ENCODE measurements at regions of chr2 and their contacts with region 1.

Region 1: GRCh38 chr2:7825591-7826312 is 856.1 kb upstream of the ID2 start:
- DNase-seq: peak in 1 of 9 donors; percentile 63
- ATAC-seq: peak; percentile 36
- H3K4me3 ChIP-seq: no peak overlapping the region
- H3K4me3 Mint-ChIP-seq: peak overlapping the region in 1 of 10 donors; percentile 54
- H3K27ac ChIP-seq: no peak overlapping the region
- H3K27ac Mint-ChIP-seq: peak overlapping the region in 4 of 9 donors; percentile 10 to 78 (median 44)
- H3K4me1 ChIP-seq: no peaks in the 10 kb centered on the region
- H3K4me1 Mint-ChIP-seq: peaks cover 0 to 25% (median 4%) of the 10 kb centered on the region in 7 donors
- H3K27me3 ChIP-seq: no peaks in the 10 kb centered on the region
- H3K27me3 Mint-ChIP-seq: no peaks in the 10 kb centered on the region

Region 2: DNA sequence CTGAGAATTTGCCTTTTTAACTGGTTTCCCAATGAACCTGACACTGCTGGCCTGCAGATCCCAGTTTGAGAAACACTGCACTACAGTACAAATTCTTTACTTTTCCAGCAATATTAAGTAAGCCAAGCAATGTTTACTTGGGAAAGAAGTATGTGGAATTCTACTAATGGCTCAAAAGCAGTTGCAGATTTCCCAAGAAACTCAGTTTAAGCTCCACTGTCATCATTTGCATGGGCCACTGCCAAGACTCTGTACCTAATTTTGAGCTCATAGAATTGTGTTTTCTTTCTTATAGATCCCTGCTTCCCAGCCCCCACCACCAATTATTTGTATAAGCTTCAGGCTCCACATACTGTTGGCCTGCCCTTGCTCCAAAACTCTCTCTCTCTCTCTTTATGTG is 232.4 kb before region 1 on chr2:
- CTCF ChIA-PET with region 1: no interaction called
- POLR2A ChIA-PET with region 1: no interaction called
- intact Hi-C with region 1: no loop called
- DNase-seq: no peak
- ATAC-seq: no peak
- H3K4me3 ChIP-seq: no peak overlapping the region
- H3K4me3 Mint-ChIP-seq: no peak overlapping the region
- H3K27ac ChIP-seq: no peak overlapping the region
- H3K27ac Mint-ChIP-seq: peak overlapping the region in 1 of 9 donors; percentile 57
- H3K4me1 ChIP-seq: no peaks in the 10 kb centered on the region
- H3K4me1 Mint-ChIP-seq: peaks cover 2 to 21% (median 11%) of the 10 kb centered on the region in 7 donors
- H3K27me3 ChIP-seq: no peaks in the 10 kb centered on the region
- H3K27me3 Mint-ChIP-seq: peaks cover 0 to 4% (median 0%) of the 10 kb centered on the region in 5 donors

Region 3: GRCh38 chr2:7845332-7845731 is 19.6 kb after region 1 on chr2:
- CTCF ChIA-PET with region 1: no interaction called
- POLR2A ChIA-PET with region 1: no interaction called
- intact Hi-C with region 1: loop called in 1 of 2 experiments (anchors 1 kb)
- DNase-seq: no peak
- ATAC-seq: no peak
- H3K4me3 ChIP-seq: no peak overlapping the region
- H3K4me3 Mint-ChIP-seq: no peak overlapping the region
- H3K27ac ChIP-seq: no peak overlapping the region
- H3K27ac Mint-ChIP-seq: no peak overlapping the region
- H3K4me1 ChIP-seq: no peaks in the 10 kb centered on the region
- H3K4me1 Mint-ChIP-seq: peaks cover 0 to 48% (median 10%) of the 10 kb centered on the region in 7 donors
- H3K27me3 ChIP-seq: no peaks in the 10 kb centered on the region
- H3K27me3 Mint-ChIP-seq: peaks cover 0 to 3% (median 0%) of the 10 kb centered on the region in 5 donors

Region 4: DNA sequence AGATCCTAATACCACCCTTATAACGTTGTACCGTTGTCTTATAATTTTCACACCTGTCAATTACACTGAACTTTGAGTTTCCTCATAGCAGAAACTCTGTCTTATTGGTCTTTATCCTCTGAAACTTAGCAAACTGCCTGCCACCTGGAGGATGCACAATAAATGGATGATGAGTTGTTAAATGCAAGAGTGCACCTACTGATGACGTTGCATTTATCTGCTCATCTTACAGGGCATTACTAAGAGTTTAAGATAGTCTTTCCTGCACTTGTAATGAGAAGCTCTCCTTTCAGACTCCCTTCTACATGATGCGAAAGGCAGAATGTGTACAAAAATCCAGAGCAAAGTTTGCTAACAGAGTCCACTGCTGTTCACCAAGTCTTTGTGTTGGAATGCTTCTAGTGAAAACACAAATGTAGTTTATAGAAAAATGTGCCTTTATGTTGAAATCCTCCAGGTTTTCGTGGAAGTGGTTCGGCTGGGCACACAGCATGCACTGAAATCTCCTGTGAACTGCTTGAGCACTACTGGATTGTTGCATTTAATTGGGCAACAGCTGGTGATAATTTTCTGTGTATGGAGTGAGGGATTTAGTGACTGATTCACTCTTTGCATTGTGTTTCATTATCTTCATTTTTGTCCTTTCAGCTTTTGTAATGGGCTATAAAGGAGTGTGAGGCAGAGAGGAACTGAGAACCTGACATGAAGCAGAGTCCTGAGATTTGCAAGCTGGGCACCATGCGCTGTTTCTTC is 190.3 kb after region 1 on chr2:
- CTCF ChIA-PET with region 1: no interaction called
- POLR2A ChIA-PET with region 1: no interaction called
- intact Hi-C with region 1: no loop called
- DNase-seq: no peak
- ATAC-seq: no peak
- H3K4me3 ChIP-seq: no peak overlapping the region
- H3K4me3 Mint-ChIP-seq: no peak overlapping the region
- H3K27ac ChIP-seq: no peak overlapping the region
- H3K27ac Mint-ChIP-seq: no peak overlapping the region
- H3K4me1 ChIP-seq: no peaks in the 10 kb centered on the region
- H3K4me1 Mint-ChIP-seq: no peaks in the 10 kb centered on the region
- H3K27me3 ChIP-seq: no peaks in the 10 kb centered on the region
- H3K27me3 Mint-ChIP-seq: no peaks in the 10 kb centered on the region